Prostate gland (tissue), 2 donors: ENCODE measurements at regions of chr1 and their contacts with region 1.

Region 1: GRCh38 chr1:147771231-147772125 is 11.1 kb upstream of the GJA5 start:
- DNase-seq: no peak
- H3K4me3 ChIP-seq: no peak overlapping the region
- H3K27ac ChIP-seq: no peak overlapping the region
- H3K4me1 ChIP-seq: no peaks in the 10 kb centered on the region
- H3K27me3 ChIP-seq: no peaks in the 10 kb centered on the region
- CTCF ChIP-seq: no peak
- POLR2A ChIP-seq: no peak

Region 2: GRCh38 chr1:147741065-147741464 is 30.4 kb before region 1 on chr1:
- intact Hi-C with region 1: no loop called
- DNase-seq: no peak
- H3K4me3 ChIP-seq: no peak overlapping the region
- H3K27ac ChIP-seq: no peak overlapping the region
- H3K4me1 ChIP-seq: no peaks in the 10 kb centered on the region
- H3K27me3 ChIP-seq: no peaks in the 10 kb centered on the region
- CTCF ChIP-seq: no peak
- POLR2A ChIP-seq: no peak

Region 3: DNA sequence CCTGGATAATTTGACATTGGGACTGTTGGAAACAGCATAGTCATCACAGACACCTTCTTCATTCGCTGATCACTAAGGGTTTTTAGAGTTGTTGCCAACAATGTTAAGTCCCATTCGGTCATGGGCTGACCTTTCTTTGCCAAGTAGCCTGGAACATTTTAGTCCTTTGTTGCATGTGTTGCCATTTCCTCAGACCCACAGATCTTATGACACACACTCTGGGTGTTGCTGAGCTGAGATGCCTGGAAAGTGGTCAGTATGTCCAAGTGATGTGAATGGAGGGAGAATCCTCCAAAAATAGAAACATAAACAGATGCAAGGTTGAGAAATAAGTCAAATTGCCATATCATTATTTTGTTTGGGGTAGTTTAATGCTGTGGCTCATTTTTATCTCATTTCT is 50.4 kb after region 1 on chr1:
- intact Hi-C with region 1: loop called (anchors 5 kb)
- DNase-seq: no peak
- H3K4me3 ChIP-seq: no peak overlapping the region
- H3K27ac ChIP-seq: no peak overlapping the region
- H3K4me1 ChIP-seq: no peaks in the 10 kb centered on the region
- H3K27me3 ChIP-seq: no peaks in the 10 kb centered on the region
- CTCF ChIP-seq: no peak
- POLR2A ChIP-seq: no peak

Region 4: GRCh38 chr1:147837129-147837963 is 65.9 kb after region 1 on chr1:
- intact Hi-C with region 1: no loop called
- DNase-seq: no peak
- H3K4me3 ChIP-seq: no peak overlapping the region
- H3K27ac ChIP-seq: no peak overlapping the region
- H3K4me1 ChIP-seq: no peaks in the 10 kb centered on the region
- H3K27me3 ChIP-seq: no peaks in the 10 kb centered on the region
- CTCF ChIP-seq: no peak
- POLR2A ChIP-seq: no peak